ENCODE measurements at regions of chr3 and their contacts with region 1.

Region 1: DNA sequence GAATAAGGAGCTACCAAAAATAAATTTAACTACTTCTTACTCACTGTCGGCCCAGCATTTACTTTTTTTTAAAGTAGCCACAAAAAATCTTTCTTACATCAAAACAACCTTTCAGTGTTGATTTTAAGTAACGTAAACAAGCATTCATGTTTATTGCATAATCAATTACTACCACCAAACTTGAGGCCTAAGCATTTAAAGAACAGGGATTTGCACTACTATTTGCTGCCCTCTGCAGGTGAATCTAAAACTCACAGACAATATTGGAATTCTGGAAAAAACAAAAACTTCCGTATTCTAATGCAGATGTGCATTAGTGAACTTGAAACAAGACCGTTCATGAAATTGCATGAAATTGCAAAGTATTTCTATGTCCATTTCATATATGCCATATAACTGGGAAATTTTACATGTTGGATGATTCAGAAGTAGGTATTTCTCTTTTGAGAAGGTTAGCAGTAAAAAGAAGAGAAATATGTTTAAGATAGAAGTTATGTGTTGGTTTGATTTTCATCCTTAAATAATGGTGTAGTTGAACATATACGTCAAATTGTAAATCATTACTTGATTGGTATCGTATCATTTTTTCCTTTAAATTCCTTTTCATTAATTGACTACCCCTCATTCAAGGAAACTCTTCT is 55.6 kb downstream of the CGGBP1 start:
- DNase-seq: no peak
- ATAC-seq: peak; percentile 67
- H3K4me3 ChIP-seq: no peak overlapping the region
- H3K27ac ChIP-seq: no peak overlapping the region
- H3K4me1 ChIP-seq: no peaks in the 10 kb centered on the region
- H3K27me3 ChIP-seq: no peaks in the 10 kb centered on the region
- CTCF ChIP-seq: peak; percentile 58 to 76 (median 59); a peak in 5 of 6 replicates
- EP300 ChIP-seq: no peak
- POLR2A ChIP-seq: no peak
- RAD21 ChIP-seq: peak; percentile 86

Region 2: DNA sequence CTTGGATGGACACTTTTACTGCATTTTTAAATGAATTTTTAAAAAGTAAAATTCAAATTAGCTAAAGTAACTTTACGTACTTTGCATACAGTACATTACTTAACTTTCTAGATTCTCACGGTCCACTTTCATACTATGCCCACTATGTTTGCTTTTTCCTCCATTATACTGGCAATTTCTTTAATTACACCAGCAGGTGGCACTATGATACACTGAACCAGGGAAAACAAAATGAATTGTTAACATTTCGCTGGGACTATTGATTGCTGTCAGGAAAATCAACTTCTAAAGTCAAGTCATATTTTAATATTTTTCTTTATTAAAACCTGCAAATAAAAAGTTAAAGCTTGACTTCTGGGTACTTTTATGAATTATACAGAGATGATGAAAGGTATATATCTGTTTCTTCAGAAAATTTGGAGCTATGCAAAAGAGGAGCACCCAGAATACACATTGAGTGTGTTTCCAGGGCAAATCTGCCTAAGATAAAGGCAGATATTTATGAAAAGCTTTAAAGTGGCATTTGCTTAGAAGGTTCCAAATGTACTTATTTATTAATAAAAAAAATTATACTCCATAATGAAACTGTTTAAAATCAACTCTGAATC is 705.0 kb before region 1 on chr3:
- CTCF ChIA-PET with region 1: interaction called, 24 read pairs
- POLR2A ChIA-PET with region 1: no interaction called
- RAD21 ChIA-PET with region 1: interaction called, 4 read pairs
- SMC1A ChIA-PET with region 1: interaction called, 8 read pairs
- in situ Hi-C with region 1: no loop called
- intact Hi-C with region 1: loop called (anchors 1 kb)
- DNase-seq: no peak
- ATAC-seq: peak; percentile 88
- H3K4me3 ChIP-seq: no peak overlapping the region
- H3K27ac ChIP-seq: no peak overlapping the region
- H3K4me1 ChIP-seq: no peaks in the 10 kb centered on the region
- H3K27me3 ChIP-seq: no peaks in the 10 kb centered on the region
- CTCF ChIP-seq: peak; percentile 52 to 59 (median 58); a peak in 5 of 6 replicates
- EP300 ChIP-seq: no peak
- POLR2A ChIP-seq: no peak
- RAD21 ChIP-seq: peak; percentile 67

Region 3: GRCh38 chr3:87503900-87504508 is 499.2 kb before region 1 on chr3:
- CTCF ChIA-PET with region 1: no interaction called
- POLR2A ChIA-PET with region 1: no interaction called
- RAD21 ChIA-PET with region 1: no interaction called
- SMC1A ChIA-PET with region 1: no interaction called
- in situ Hi-C with region 1: no loop called
- intact Hi-C with region 1: loop called (anchors 10 kb)
- DNase-seq: no peak
- ATAC-seq: peak; percentile 78
- H3K4me3 ChIP-seq: no peak overlapping the region
- H3K27ac ChIP-seq: no peak overlapping the region
- H3K4me1 ChIP-seq: no peaks in the 10 kb centered on the region
- H3K27me3 ChIP-seq: no peaks in the 10 kb centered on the region
- CTCF ChIP-seq: peak; percentile 48 to 60 (median 54)
- EP300 ChIP-seq: no peak
- POLR2A ChIP-seq: no peak
- RAD21 ChIP-seq: peak; percentile 65

Region 4: DNA sequence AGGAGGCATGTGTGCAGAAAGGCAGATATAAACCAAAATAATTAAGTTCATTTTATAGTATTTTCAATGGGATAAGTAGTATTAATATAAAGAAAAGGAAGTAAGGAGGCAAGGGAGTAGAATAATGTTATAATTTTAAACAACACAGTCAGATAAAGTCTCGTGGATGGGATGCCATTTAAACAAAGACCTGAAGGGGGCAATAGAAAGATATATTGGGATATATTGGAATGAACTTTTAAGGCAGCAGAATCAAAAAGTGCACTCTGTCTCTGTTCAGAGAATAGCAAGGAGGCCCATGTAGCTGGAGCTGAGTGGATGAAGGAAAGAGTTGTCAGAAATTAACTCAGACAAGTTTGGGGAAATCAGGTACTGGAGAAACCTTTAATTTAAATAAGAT is 103.2 kb before region 1 on chr3:
- CTCF ChIA-PET with region 1: interaction called, 6 read pairs
- POLR2A ChIA-PET with region 1: interaction called, 3 read pairs
- RAD21 ChIA-PET with region 1: interaction called, 3 read pairs
- SMC1A ChIA-PET with region 1: interaction called, 4 read pairs
- in situ Hi-C with region 1: no loop called
- intact Hi-C with region 1: loop called (anchors 1 kb)
- DNase-seq: no peak
- ATAC-seq: peak; percentile 49
- H3K4me3 ChIP-seq: no peak overlapping the region
- H3K27ac ChIP-seq: no peak overlapping the region
- H3K4me1 ChIP-seq: no peaks in the 10 kb centered on the region
- H3K27me3 ChIP-seq: no peaks in the 10 kb centered on the region
- CTCF ChIP-seq: peak; percentile 6 to 30 (median 15); a peak in 1 of 6 replicates
- EP300 ChIP-seq: no peak
- POLR2A ChIP-seq: no peak
- RAD21 ChIP-seq: peak; percentile 41; the same call in 1 of the 2 replicates

Region 5: GRCh38 chr3:87924485-87924884 is 78.8 kb before region 1 on chr3:
- CTCF ChIA-PET with region 1: no interaction called
- POLR2A ChIA-PET with region 1: no interaction called
- RAD21 ChIA-PET with region 1: no interaction called
- SMC1A ChIA-PET with region 1: no interaction called
- in situ Hi-C with region 1: no loop called
- intact Hi-C with region 1: no loop called
- DNase-seq: no peak
- ATAC-seq: no peak
- H3K4me3 ChIP-seq: no peak overlapping the region
- H3K27ac ChIP-seq: no peak overlapping the region
- H3K4me1 ChIP-seq: no peaks in the 10 kb centered on the region
- H3K27me3 ChIP-seq: no peaks in the 10 kb centered on the region
- CTCF ChIP-seq: no peak
- EP300 ChIP-seq: no peak
- POLR2A ChIP-seq: no peak
- RAD21 ChIP-seq: no peak

Region 6: GRCh38 chr3:88084097-88084501 is 80.9 kb after region 1 on chr3:
- CTCF ChIA-PET with region 1: no interaction called
- POLR2A ChIA-PET with region 1: no interaction called
- RAD21 ChIA-PET with region 1: no interaction called
- SMC1A ChIA-PET with region 1: no interaction called
- in situ Hi-C with region 1: no loop called
- intact Hi-C with region 1: no loop called
- DNase-seq: no peak
- ATAC-seq: no peak
- H3K4me3 ChIP-seq: no peak overlapping the region
- H3K27ac ChIP-seq: no peak overlapping the region
- H3K4me1 ChIP-seq: no peaks in the 10 kb centered on the region
- H3K27me3 ChIP-seq: no peaks in the 10 kb centered on the region
- CTCF ChIP-seq: no peak
- EP300 ChIP-seq: no peak
- POLR2A ChIP-seq: no peak
- RAD21 ChIP-seq: no peak

Region 7: DNA sequence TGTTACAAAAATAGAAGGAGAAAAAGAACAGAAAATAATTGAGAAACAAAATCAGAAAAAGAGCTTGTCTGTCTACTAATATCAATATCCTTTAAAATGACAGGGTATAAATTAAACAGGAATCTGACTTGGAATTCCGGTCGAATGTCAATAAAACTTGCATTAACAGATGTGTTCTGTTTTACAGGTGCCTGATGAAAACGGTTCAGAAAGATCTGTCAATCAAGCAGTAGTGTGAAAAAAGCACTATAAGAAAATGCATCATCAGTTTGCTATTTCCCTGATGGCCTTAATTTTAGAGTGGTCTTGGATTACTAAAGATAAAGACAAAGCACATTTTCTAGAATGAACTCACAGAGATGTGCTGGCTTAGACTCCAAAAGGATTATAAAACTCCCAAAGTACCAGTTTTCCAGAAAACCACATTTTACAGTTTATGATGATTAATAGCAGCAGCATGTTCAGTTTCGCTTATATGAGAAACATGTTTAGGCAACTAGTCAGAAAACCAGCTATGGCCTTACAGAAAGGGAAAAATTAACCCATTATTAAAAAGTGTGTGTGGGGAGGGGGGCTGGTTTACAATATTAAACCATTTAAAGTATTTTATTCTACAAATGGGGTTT is 138.3 kb after region 1 on chr3:
- CTCF ChIA-PET with region 1: no interaction called
- POLR2A ChIA-PET with region 1: no interaction called
- RAD21 ChIA-PET with region 1: no interaction called
- SMC1A ChIA-PET with region 1: no interaction called
- in situ Hi-C with region 1: no loop called
- intact Hi-C with region 1: no loop called
- DNase-seq: no peak
- ATAC-seq: peak; percentile 20; the same call in 2 of the 3 replicates
- H3K4me3 ChIP-seq: no peak overlapping the region
- H3K27ac ChIP-seq: no peak overlapping the region
- H3K4me1 ChIP-seq: no peaks in the 10 kb centered on the region; the same call in 1 of the 2 replicates
- H3K27me3 ChIP-seq: no peaks in the 10 kb centered on the region
- CTCF ChIP-seq: no peak
- EP300 ChIP-seq: no peak
- POLR2A ChIP-seq: no peak
- RAD21 ChIP-seq: no peak

Region 8: GRCh38 chr3:88203642-88204055 is 200.4 kb after region 1 on chr3:
- CTCF ChIA-PET with region 1: no interaction called
- POLR2A ChIA-PET with region 1: no interaction called
- RAD21 ChIA-PET with region 1: no interaction called
- SMC1A ChIA-PET with region 1: no interaction called
- in situ Hi-C with region 1: no loop called
- intact Hi-C with region 1: no loop called
- DNase-seq: peak; percentile 24
- ATAC-seq: peak; percentile 98
- H3K4me3 ChIP-seq: no peak overlapping the region
- H3K27ac ChIP-seq: no peak overlapping the region
- H3K4me1 ChIP-seq: no peaks in the 10 kb centered on the region
- H3K27me3 ChIP-seq: no peaks in the 10 kb centered on the region
- CTCF ChIP-seq: peak; percentile 84 to 85 (median 84)
- EP300 ChIP-seq: no peak
- POLR2A ChIP-seq: no peak
- RAD21 ChIP-seq: peak; percentile 90

Measured in GM12878 (cell line).